AG04450 (cell line): ENCODE measurements at regions of chr2 and their contacts with region 1.

Region 1: DNA sequence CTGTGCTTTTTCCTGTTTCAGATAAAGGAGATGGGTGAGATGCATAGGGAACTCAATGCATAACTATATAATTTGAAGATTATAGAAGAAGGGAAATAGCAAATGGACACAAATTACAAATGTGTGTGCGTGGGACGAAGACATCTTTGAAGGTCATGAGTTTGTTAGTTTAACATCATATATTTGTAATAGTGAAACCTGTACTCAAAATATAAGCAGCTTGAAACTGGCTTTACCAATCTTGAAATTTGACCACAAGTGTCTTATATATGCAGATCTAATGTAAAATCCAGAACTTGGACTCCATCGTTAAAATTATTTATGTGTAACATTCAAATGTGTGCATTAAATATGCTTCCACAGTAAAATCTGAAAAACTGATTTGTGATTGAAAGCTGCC is 16.4 kb upstream of the MSH2 start:
- DNase-seq: no peak
- H3K4me3 ChIP-seq: no peak overlapping the region
- H3K27ac ChIP-seq: no peak overlapping the region
- H3K27me3 ChIP-seq: no peaks in the 10 kb centered on the region
- CTCF ChIP-seq: no peak

Region 2: GRCh38 chr2:47309952-47310800 is 76.4 kb before region 1 on chr2:
- CTCF ChIA-PET with region 1: no interaction called
- POLR2A ChIA-PET with region 1: no interaction called
- DNase-seq: no peak
- H3K4me3 ChIP-seq: no peak overlapping the region
- H3K27ac ChIP-seq: no peak overlapping the region
- H3K27me3 ChIP-seq: no peaks in the 10 kb centered on the region
- CTCF ChIP-seq: no peak

Region 3: GRCh38 chr2:47334356-47335136 is 52.0 kb before region 1 on chr2:
- CTCF ChIA-PET with region 1: interaction called, 220 read pairs
- POLR2A ChIA-PET with region 1: interaction called, 10 read pairs
- DNase-seq: no peak
- H3K4me3 ChIP-seq: no peak overlapping the region
- H3K27ac ChIP-seq: no peak overlapping the region
- H3K27me3 ChIP-seq: no peaks in the 10 kb centered on the region
- CTCF ChIP-seq: no peak

Region 4: DNA sequence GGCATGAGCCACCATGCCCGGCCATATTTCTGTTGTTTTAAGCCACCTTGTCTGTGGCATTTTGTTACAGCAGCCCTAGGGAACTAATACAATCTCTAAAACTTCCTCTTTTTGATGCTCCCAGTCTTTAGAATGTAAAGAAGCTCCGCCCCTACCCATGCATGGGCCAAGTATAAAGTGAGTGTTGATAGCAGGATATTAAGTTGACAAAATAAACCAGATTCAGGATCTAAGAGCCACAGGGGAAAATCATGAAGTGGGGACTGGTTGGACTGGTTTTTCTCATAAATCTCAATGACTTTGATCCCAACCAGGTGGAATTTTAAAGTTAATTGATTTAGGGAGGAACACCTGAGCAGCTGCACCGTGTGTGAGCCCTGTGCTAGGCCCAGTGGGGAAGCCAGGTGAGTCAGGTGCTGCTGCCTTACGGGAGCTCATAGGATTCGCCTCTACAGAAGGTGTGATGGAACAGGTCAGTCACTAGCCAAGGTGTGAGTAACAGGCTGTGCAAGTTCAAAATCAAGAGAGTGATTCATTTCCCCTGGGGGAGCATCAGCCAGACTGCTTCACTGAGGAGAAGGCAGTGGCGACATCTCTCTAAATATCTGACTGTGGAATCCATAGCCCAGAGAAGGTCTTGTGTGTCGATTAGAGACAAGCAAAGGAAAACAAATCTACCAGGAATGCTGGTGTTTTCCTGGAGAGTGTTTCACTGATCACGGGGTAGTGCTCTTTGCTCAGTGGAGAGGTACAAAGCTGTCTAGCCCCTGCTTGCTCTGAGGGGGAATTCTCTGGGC is 46.6 kb before region 1 on chr2:
- CTCF ChIA-PET with region 1: interaction called, 220 read pairs
- POLR2A ChIA-PET with region 1: interaction called, 10 read pairs
- DNase-seq: no peak
- H3K4me3 ChIP-seq: no peak overlapping the region
- H3K27ac ChIP-seq: no peak overlapping the region
- H3K27me3 ChIP-seq: no peaks in the 10 kb centered on the region
- CTCF ChIP-seq: no peak

Region 5: DNA sequence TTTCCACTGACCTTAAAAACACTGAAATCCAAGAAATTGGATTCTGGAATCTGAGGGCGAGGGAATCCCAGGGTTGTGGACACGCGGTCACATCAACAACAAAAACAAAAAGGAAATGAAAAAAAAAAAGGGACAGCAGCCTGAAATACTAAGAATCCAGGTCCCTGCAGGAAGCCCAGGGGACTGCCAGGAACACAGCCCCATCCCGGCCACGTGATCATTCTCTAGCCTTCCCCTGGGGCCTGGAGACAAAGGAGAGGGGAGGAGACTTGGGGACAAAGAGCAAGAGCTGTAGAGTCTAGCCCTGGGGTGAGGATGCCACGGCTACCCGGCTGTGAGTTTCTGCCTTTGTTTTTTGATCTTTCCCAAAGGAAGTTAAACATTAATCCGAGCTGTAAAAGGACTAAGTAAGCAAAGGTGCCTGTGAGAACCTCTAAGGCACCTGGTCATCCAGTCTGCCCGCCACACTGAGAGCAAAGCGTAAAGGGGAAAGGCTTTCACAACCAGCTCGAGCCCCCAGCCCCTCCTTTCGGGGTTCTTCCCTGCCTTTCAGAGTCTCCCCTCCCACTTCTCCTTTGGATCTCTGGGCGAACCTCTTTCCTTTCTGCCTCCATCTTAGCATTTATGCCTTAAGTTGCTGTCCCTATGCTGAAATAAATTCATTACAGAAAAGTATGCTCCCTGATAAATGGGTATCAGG is 41.5 kb before region 1 on chr2:
- CTCF ChIA-PET with region 1: interaction called, 220 read pairs
- POLR2A ChIA-PET with region 1: interaction called, 4 read pairs
- DNase-seq: no peak
- H3K4me3 ChIP-seq: no peak overlapping the region; the same call in 1 of the 2 replicates
- H3K27ac ChIP-seq: peak overlapping the region; percentile 21
- H3K27me3 ChIP-seq: no peaks in the 10 kb centered on the region
- CTCF ChIP-seq: peak; percentile 25

Region 6: DNA sequence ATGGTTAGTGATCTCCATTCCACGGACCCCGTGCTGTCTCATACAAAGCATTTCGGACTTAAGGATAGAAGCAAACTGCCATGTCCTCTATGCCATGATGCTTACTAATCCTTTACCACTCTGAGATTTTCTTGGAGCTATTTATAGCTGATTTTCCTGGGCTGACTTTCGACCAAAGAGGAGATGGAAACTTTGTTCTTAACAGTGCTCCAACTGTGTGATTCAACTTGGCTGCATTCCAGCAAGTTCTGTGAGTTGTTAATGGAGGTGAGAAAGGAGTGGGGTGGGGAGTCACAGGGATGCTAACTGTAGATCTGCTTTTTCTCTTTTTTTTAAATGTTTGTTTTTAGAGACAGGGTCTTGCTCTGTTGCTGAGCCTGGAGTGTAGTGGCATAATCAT is 29.1 kb before region 1 on chr2:
- CTCF ChIA-PET with region 1: interaction called, 14 read pairs
- POLR2A ChIA-PET with region 1: no interaction called
- DNase-seq: no peak
- H3K4me3 ChIP-seq: no peak overlapping the region
- H3K27ac ChIP-seq: no peak overlapping the region
- H3K27me3 ChIP-seq: no peaks in the 10 kb centered on the region
- CTCF ChIP-seq: no peak

Region 7: GRCh38 chr2:47373747-47374146 is 12.8 kb before region 1 on chr2:
- CTCF ChIA-PET with region 1: interaction called, 16 read pairs
- POLR2A ChIA-PET with region 1: no interaction called
- DNase-seq: no peak
- H3K4me3 ChIP-seq: no peak overlapping the region
- H3K27ac ChIP-seq: no peak overlapping the region
- H3K27me3 ChIP-seq: peaks cover 23% of the 10 kb centered on the region
- CTCF ChIP-seq: no peak

Region 8: GRCh38 chr2:47402805-47403608 is 16.5 kb after region 1 on chr2 and contains the start of gene MSH2:
- CTCF ChIA-PET with region 1: interaction called, 17 read pairs
- POLR2A ChIA-PET with region 1: interaction called, 4 read pairs
- DNase-seq: peak; percentile 73
- H3K4me3 ChIP-seq: peak within 1 kb of the TSS; percentile 80
- H3K27ac ChIP-seq: peak within 1 kb of the TSS; percentile 65
- H3K27me3 ChIP-seq: no peaks in the 10 kb centered on the region
- CTCF ChIP-seq: no peak
- polyA plus RNA-seq, gene MSH2: 12.6 and 18.4 TPM in 2 replicates

Region 9: GRCh38 chr2:47617028-47617427 is 230.5 kb after region 1 on chr2:
- CTCF ChIA-PET with region 1: no interaction called
- POLR2A ChIA-PET with region 1: no interaction called
- DNase-seq: no peak
- H3K4me3 ChIP-seq: no peak overlapping the region
- H3K27ac ChIP-seq: no peak overlapping the region
- H3K27me3 ChIP-seq: peaks cover 13% of the 10 kb centered on the region
- CTCF ChIP-seq: no peak

Region 10: DNA sequence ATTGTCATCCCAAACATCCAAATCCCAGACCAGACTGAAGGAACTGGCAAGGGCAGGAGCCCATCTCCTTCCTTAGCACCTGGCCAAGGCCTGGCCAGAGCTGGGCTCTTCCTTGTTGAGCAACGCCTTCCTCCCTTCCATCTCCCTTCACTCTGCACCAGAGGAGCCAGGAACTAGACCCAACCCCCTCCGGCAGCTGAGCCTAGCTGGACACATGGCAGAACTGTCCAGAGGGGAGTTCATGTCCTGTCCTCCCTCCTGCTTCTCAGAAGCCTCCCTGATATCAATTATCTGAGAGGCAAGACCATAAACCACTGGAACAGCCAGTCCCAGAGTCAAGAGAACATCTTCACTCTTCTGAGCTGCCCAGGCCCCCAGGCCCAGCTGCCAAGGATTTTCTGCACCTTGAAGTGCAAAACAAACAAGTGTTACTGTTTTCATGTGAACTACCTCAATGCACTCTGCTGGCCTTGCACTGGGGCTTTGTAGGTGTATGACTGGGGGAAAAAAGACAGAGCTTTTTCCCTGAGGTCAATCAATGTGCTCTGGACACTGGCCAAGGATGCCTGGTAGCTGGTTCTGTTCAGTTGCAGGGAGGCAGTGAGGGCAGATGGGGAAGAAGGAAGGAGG is 288.8 kb after region 1 on chr2:
- CTCF ChIA-PET with region 1: no interaction called
- POLR2A ChIA-PET with region 1: no interaction called
- DNase-seq: no peak
- H3K4me3 ChIP-seq: no peak overlapping the region
- H3K27ac ChIP-seq: no peak overlapping the region
- H3K27me3 ChIP-seq: peaks cover 3% of the 10 kb centered on the region
- CTCF ChIP-seq: no peak

Region 11: DNA sequence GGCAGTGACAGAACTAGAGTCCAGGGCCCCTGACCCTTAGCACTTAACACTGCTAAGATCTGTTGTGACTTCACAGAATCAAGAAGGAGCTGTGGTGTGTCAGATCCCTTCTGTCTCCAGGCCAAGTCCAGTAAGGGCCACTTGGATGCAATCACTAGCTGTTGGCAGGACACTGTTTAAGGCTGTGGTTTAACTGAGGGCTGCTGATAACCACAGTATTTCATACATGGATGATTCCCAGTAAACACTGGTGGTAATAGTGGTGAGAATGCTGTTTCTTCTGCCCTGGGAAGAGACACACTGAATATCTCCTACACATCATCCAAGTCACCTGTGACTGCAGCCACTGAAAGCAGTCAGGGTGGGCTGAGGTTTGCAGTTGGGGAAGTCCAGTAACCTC is 597.5 kb after region 1 on chr2:
- CTCF ChIA-PET with region 1: no interaction called
- POLR2A ChIA-PET with region 1: no interaction called
- DNase-seq: no peak
- H3K4me3 ChIP-seq: no peak overlapping the region
- H3K27ac ChIP-seq: no peak overlapping the region
- H3K27me3 ChIP-seq: no peaks in the 10 kb centered on the region
- CTCF ChIP-seq: no peak